Breast epithelium (tissue), 4 donors: ENCODE measurements at regions of chr6 and their contacts with region 1.

Region 1: DNA sequence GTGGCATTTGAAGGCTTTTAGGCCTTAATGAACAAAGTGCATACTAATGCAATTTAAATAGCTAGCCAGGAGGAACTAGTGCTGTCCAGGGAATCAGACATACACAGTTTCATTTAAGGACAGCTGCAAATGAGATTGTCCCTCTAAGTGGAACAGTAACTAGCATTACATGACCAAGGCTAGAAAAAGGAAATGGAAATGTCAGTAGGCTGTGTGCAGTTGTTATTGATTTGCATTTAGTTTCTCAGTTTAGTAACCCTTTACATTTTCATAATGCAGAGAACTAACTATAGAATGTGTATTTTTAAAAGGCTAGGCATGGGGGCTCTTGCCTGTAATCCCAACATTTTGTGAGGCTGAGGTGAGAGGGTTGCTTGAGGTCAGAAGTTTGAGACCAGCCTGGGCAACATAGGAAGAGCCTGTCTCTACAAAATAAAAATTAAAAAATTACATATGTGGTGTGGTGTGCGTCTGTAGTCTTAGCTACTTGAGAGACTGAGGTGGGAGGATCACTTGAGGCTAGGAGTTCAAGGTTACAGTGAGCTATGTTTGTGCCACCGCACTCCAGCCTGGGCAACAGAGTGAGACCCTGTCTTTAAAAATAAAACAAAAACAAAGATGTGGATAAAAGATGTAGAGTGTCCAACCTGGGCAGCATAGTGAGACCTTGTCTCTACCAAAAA is 468.0 kb downstream of the UTRN start:
- DNase-seq: no peak
- H3K4me3 ChIP-seq: no peak overlapping the region
- H3K27ac ChIP-seq: no peak overlapping the region
- H3K4me1 ChIP-seq: peaks cover 0 to 4% of the 10 kb centered on the region in 2 donors
- H3K27me3 ChIP-seq: no peaks in the 10 kb centered on the region
- CTCF ChIP-seq: no peak
- POLR2A ChIP-seq: no peak

Region 2: DNA sequence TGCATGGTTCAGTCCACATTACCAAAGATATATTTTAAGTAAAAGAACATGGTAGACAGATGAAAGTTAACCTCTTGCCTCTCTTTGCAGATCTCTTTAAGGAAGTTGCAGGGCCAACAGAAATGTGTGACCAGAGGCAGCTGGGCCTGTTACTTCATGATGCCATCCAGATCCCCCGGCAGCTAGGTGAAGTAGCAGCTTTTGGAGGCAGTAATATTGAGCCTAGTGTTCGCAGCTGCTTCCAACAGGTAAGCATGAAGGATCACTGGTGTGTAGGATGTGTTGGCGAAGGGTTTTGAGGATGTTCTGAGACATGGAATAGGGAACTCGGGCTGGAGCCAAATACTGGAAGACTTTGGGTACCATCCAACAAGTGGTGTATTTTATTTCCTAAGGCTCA is 40.6 kb after region 1 on chr6:
- intact Hi-C with region 1: loop called (anchors 2 kb)
- DNase-seq: no peak
- H3K4me3 ChIP-seq: no peak overlapping the region
- H3K27ac ChIP-seq: no peak overlapping the region
- H3K4me1 ChIP-seq: no peaks in the 10 kb centered on the region
- H3K27me3 ChIP-seq: no peaks in the 10 kb centered on the region
- CTCF ChIP-seq: no peak
- POLR2A ChIP-seq: no peak